ENCODE measurements at regions of chr2 and their contacts with region 1.

Region 1: GRCh38 chr2:207706936-207707809 is 4.3 kb upstream of the CCNYL1 start:
- ATAC-seq: no peak
- H3K4me3 ChIP-seq: no peak overlapping the region
- H3K27ac ChIP-seq: no peak overlapping the region
- H3K4me1 ChIP-seq: no peaks in the 10 kb centered on the region

Region 2: DNA sequence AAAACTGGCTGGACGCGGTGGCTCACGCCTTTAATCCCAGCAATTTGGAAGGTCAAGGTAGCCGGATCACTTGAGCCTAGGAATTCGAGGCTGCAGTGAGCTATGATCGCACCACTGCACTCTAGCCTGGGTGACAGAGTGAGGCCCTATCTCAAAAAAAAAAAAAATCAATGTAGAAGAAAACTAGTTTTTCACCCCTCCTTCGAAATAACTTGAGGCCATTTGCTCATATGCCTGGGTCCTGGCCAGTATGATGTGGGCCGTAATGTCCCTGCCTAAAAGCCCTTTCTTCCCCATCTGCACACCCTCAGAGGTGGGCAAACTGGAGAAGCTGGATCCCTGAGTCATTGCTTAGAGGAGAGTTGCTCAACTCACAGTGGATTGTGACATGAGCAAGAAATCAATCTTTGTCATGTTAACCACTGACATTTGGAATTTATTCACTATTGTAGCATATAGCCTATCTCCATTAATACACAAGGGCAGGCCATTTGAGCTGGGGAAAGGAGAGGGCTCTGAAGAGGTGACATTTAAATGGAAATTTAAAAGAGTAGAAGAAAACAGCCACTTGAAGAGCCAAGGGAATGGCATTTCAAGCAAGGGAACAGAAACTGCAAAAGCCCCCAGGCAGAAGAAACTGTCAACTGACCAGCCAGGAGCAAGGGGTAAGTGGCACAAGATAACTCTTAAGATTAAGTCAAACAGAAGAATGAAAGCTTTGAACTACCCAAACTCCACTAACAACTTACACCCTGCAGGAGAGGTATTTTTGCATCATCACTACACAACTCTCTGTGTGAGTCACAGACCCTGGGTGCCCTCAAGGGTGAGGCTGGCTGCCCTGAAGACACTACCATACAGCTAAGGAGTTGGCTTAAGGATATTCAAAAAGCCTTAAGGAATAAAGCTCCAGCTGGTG is 74.3 kb before region 1 on chr2:
- in situ Hi-C with region 1: loop called in 1 of 9 experiments (anchors 10 kb)
- ATAC-seq: peak in 3 of 8 experiments; percentile 88 to 92 (median 90)
- H3K4me3 ChIP-seq: no peak overlapping the region
- H3K27ac ChIP-seq: no peak overlapping the region
- H3K4me1 ChIP-seq: no peaks in the 10 kb centered on the region

Region 3: DNA sequence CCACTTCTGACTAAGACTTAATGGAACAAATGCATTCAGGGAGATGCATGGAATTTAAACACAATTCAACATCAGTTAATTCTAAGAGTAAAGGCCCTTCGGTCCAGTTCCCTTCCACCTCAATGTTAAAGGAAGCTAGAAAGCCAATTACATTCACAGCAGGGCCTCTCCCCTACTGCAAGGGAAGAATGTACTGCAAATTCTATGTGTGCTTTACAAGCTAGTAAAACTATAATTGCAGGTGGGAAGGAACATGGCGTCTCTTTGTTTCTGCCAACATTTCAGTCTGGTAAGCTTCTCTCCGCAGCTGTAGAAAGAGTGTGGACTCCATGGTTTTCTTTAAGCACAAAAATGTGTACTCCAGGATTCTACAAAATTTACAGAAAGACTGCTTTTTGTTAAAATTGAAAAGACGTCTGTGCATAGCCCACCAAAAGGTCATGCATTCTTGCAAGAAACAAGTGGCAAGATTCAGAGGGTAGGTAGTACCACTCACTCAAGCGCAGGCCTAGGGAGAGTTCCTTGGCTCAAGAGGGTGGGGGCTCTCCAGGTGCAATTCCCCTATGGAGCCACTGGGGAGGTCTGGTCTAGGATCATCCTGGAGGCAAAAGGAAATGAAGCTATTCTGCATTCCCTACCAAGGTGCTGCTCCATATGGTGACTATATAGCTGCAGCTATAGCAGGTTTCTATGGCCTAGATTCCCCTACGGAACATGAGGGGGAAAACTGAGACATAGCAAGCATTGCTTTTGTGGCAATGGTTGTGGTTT is 189.5 kb after region 1 on chr2:
- in situ Hi-C with region 1: no loop called
- ATAC-seq: peak in 1 of 8 experiments; percentile 61
- H3K4me3 ChIP-seq: no peak overlapping the region
- H3K27ac ChIP-seq: no peak overlapping the region
- H3K4me1 ChIP-seq: peaks cover 6 to 8% of the 10 kb centered on the region in 2 donors

Measured in motor neuron (in vitro differentiated cells).